Heart left ventricle (tissue), 16 donors: ENCODE measurements at regions of chr1 and their contacts with region 1.

Region 1: GRCh38 chr1:234755449-234755863 is 145.5 kb upstream of the IRF2BP2 start:
- DNase-seq: peak; percentile 43 to 78 (median 74)
- ATAC-seq: peak; percentile 43 to 92 (median 80)
- H3K4me3 ChIP-seq: peak overlapping the region in 2 of 12 donors; percentile 10 to 24
- H3K27ac ChIP-seq: peak overlapping the region in 1 of 12 donors; percentile 10
- H3K4me1 ChIP-seq: peaks cover 0 to 32% (median 20%) of the 10 kb centered on the region in 12 donors
- H3K27me3 ChIP-seq: no peaks in the 10 kb centered on the region
- CTCF ChIP-seq: no peak
- POLR2A ChIP-seq: no peak

Region 2: GRCh38 chr1:234683861-234684632 is 71.4 kb before region 1 on chr1:
- intact Hi-C with region 1: no loop called
- DNase-seq: peak in 4 of 5 donors; percentile 60 to 79 (median 70)
- ATAC-seq: peak; percentile 92 to 99 (median 98)
- H3K4me3 ChIP-seq: no peak overlapping the region
- H3K27ac ChIP-seq: peak overlapping the region in 11 of 12 donors; percentile 24 to 77 (median 65)
- H3K4me1 ChIP-seq: peaks cover 0 to 20% (median 11%) of the 10 kb centered on the region in 12 donors
- H3K27me3 ChIP-seq: no peaks in the 10 kb centered on the region
- CTCF ChIP-seq: no peak
- POLR2A ChIP-seq: no peak

Region 3: DNA sequence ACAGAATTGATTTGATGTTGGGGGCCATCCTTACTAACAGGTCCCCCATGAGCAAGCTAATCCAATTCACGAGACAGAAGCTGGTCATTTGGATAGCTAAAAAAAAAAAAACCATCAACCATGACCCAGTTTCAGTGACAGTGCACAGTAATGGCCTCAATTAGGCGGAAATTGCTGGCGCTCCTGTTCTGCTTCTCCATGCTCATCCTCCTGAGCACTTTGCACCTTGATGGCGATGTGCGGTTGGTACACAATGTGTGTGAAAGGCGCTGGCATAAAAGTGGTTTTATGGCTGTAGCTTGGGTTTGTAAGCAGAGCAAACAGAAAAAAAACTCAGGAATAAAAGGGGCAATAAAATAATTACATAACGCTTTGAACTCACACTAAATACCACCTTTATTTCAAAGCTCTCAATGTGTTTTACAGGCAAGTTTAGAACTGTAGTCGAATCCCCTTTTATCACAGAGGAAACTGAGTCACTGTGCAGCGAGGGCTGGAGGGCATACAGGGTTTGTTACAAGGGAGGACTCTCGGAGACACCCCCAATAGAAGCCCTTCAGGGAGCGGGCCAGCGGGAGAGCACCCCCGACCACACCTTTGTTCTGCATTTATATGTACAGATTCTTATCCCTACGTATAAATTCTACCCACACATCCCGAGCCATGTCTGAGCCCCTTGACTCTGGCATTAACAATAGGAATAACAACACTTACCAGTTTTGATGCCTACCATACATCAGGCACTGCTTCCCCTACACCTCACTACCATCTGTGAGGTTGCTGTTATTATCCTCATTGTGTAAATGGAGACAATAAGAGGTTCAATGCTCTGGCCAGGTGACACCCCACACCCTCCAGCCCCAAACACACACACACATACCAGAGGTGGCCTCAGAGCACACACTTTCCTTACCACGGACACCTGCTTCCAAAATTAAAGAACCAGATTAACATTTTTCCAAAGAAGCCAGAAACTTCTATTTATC is 68.0 kb after region 1 on chr1:
- intact Hi-C with region 1: loop called in 1 of 10 experiments (anchors 10 kb)
- DNase-seq: no peak
- ATAC-seq: no peak
- H3K4me3 ChIP-seq: no peak overlapping the region
- H3K27ac ChIP-seq: no peak overlapping the region
- H3K4me1 ChIP-seq: no peaks in the 10 kb centered on the region
- H3K27me3 ChIP-seq: no peaks in the 10 kb centered on the region
- CTCF ChIP-seq: no peak
- POLR2A ChIP-seq: no peak

Region 4: DNA sequence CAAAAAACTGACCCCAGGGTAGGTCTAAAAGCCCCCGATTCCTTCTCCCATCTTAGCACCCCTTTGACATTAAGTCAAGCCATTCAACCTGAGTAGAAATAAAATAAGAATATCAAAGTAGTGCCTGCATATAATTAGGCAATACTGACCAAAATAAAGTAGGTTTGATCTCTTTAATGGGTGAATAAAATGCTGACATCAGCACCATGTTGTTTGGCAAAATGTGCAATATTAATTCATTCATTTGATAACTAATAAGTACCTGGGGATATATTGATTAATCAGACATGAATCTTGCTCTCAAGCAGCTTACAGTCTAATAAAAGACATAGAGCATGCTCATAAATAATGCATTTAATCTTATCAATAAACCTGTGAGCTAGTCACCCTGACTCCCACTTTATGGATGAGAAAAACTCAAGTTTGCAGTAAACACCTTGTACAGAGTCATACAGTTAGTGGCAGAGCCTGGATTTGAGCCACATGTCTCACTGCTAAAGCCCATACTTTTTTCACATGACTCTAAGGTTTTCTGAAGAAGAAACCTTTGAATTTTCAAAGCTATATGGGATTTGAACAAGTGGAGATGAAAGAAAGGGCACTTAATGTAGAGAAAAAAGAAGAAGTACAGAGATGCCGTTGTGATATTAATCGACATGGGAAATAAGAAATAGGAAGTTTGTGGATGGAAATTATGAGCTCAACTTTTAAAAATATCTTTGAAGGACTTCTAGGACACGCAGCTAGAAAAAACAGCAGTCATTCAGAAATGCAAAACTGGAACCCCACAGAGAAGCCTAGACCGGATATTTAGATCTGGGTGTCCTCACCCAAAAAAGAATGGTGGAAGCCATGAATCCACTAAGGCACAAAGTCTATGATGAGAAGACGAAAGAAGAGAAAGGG is 189.2 kb after region 1 on chr1:
- intact Hi-C with region 1: no loop called
- DNase-seq: no peak
- ATAC-seq: peak in 2 of 4 donors; percentile 36 to 39
- H3K4me3 ChIP-seq: no peak overlapping the region
- H3K27ac ChIP-seq: peak overlapping the region in 8 of 12 donors; percentile 2 to 82 (median 46)
- H3K4me1 ChIP-seq: peaks cover 0 to 30% (median 7%) of the 10 kb centered on the region in 12 donors
- H3K27me3 ChIP-seq: no peaks in the 10 kb centered on the region
- CTCF ChIP-seq: no peak
- POLR2A ChIP-seq: no peak